ENCODE measurements at regions of chr22 and their contacts with region 1.

Region 1: GRCh38 chr22:41448189-41448808 is 1.7 kb upstream of the TOB2 start:
- DNase-seq: peak; percentile 90 to 99 (median 98)
- H3K4me3 ChIP-seq: peak overlapping the region; percentile 71 to 100 (median 98)
- H3K27ac ChIP-seq: peak overlapping the region; percentile 97 to 100 (median 100)
- H3K27me3 ChIP-seq: no peaks in the 10 kb centered on the region
- CTCF ChIP-seq: peak in 9 of 56 donors; percentile 9 to 39 (median 20)

Region 2: GRCh38 chr22:41403532-41404318 is 44.6 kb before region 1 on chr22:
- intact Hi-C with region 1: loop called (anchors 1 to 2 kb)
- DNase-seq: peak; percentile 97 to 100 (median 98)
- H3K4me3 ChIP-seq: peak overlapping the region in 19 of 59 donors; percentile 2 to 38 (median 12)
- H3K27ac ChIP-seq: peak overlapping the region; percentile 86 to 100 (median 98)
- H3K27me3 ChIP-seq: no peaks in the 10 kb centered on the region
- CTCF ChIP-seq: peak; percentile 92 to 100 (median 99)

Region 3: GRCh38 chr22:41417622-41418390 is 30.5 kb before region 1 on chr22:
- intact Hi-C with region 1: loop called in 1 of 2 experiments (anchors 1 kb)
- DNase-seq: peak; percentile 95 to 100 (median 97)
- H3K4me3 ChIP-seq: peak overlapping the region in 41 of 59 donors; percentile 1 to 45 (median 26)
- H3K27ac ChIP-seq: peak overlapping the region; percentile 82 to 100 (median 100)
- H3K27me3 ChIP-seq: no peaks in the 10 kb centered on the region
- CTCF ChIP-seq: peak in 23 of 56 donors; percentile 5 to 45 (median 23)

Region 4: GRCh38 chr22:41468381-41469217 is 20.3 kb after region 1 on chr22 and contains the starts of genes ACO2 and PHF5A:
- intact Hi-C with region 1: loop called (anchors 1 to 2 kb)
- DNase-seq: peak; percentile 96 to 99 (median 98)
- H3K4me3 ChIP-seq: peak within 1 kb of the TSS; percentile 69 to 100 (median 98)
- H3K27ac ChIP-seq: peak within 1 kb of the TSS; percentile 85 to 99 (median 97)
- H3K27me3 ChIP-seq: no peaks in the 10 kb centered on the region
- CTCF ChIP-seq: peak in 31 of 56 donors; percentile 5 to 53 (median 28)
- total RNA-seq, gene ACO2: 173 to 339 (median 261) TPM
- total RNA-seq, gene PHF5A: 10.3 to 36.8 (median 22.3) TPM

Measured in dorsolateral prefrontal cortex (tissue), 120 donors.